A549 (cell line): ENCODE measurements at regions of chr17 and their contacts with region 1.

Region 1: GRCh38 chr17:79839363-79840268 is at the start of gene CBX4:
- DNase-seq: peak; percentile 87 to 97
- ATAC-seq: peak; percentile 61 to 73
- H3K4me3 ChIP-seq: peak within 1 kb of the TSS; percentile 82
- H3K27ac ChIP-seq: peak within 1 kb of the TSS; percentile 95 to 98
- H3K4me1 ChIP-seq: peaks cover 52% of the 10 kb centered on the region
- CTCF ChIP-seq: peak; percentile 99
- EP300 ChIP-seq: peak in 1 of 2 experiments; percentile 55; a peak in 1 of 5 replicates
- POLR2A ChIP-seq: peak; percentile 77
- RAD21 ChIP-seq: peak; percentile 55 to 90
- polyA plus RNA-seq, gene CBX4: 21.9 and 34.1 TPM in 2 replicates

Region 2: DNA sequence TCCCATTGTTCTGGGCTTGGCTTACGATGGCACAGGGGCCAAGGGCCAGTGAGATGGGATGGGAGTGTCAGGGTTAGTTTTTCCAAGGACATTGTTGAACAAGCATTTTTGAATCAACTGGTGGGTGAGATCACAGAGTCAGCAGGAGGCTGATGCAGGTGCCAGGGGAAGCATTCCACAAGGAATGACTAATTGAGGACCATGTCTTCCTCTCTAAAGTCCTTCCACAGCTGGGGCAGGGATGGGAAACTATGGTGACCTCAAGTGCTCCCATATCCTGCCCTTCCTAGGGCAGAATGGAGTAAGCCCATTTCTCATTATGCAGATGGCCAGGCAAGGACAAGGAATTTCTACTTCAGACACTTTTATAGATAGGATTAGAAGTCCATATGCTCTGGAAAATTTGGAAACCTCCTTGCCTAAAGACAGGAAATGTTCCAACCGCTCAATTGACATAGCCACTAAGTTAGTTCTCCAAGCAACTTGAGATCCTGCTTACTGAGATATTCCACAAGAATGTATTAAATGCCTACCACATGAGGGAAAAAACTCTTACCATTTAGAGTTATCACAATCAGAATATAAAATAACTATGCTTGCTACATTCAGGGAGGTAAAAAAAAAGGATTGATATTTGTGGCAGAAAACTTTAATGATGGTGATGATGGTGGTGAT is 786.2 kb before region 1 on chr17:
- CTCF ChIA-PET with region 1: no interaction called
- POLR2A ChIA-PET with region 1: no interaction called
- DNase-seq: no peak
- ATAC-seq: no peak
- H3K4me3 ChIP-seq: no peak overlapping the region
- H3K27ac ChIP-seq: no peak overlapping the region
- H3K4me1 ChIP-seq: no peaks in the 10 kb centered on the region
- CTCF ChIP-seq: no peak
- EP300 ChIP-seq: no peak
- POLR2A ChIP-seq: no peak
- RAD21 ChIP-seq: no peak

Region 3: DNA sequence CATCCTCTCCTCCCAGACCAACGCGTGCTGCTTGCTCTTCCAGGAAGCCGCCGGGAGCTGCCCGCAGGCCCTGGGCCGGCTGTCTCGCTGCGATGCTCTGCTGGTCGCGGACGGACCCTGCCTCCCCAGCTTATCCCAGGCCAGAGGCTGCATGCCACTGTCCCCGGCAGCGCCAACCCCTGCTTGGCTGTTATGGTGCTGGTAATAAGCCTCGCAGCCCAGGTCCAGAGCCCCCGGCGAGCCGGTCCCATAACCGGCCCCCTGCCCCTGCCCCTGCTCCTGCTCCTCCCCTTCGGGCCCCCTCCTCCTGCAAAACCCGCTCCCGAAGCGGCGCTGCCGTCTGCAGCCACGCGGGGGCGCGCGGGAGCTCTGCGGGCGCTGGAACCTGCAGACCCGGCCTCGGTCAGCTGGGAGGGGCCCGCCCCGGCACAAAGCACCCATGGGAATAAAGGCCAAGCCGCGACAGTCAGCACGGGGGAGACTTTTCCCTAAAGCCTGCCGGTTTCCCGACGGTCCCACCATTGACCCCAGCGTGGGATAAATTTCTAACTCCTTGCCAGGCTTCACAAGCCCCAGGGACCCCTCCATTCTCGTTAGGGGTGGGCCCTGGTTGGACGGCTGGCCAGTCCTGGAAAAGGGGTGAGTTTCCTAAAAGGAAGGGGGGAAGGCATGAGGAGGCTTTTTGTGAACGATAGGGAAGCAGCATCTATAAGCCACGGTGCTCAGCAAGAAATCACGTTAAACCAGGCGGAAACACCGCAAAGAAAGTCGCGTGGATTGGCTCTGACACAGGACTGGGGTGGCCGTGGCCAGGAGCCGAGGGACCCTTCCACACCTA is 97.6 kb before region 1 on chr17:
- CTCF ChIA-PET with region 1: interaction called, 28 read pairs
- POLR2A ChIA-PET with region 1: interaction called, 6 read pairs
- DNase-seq: peak; percentile 69 to 93
- ATAC-seq: peak; percentile 68 to 85
- H3K4me3 ChIP-seq: peak overlapping the region; percentile 36; the same call in 2 of the 3 replicates
- H3K27ac ChIP-seq: peak overlapping the region; percentile 51 to 74; a peak in 5 of 6 replicates
- H3K4me1 ChIP-seq: peaks cover 18% of the 10 kb centered on the region; the same call in 2 of the 3 replicates
- CTCF ChIP-seq: peak; percentile 97
- EP300 ChIP-seq: no peak
- POLR2A ChIP-seq: no peak
- RAD21 ChIP-seq: peak; percentile 72 to 85

Region 4: DNA sequence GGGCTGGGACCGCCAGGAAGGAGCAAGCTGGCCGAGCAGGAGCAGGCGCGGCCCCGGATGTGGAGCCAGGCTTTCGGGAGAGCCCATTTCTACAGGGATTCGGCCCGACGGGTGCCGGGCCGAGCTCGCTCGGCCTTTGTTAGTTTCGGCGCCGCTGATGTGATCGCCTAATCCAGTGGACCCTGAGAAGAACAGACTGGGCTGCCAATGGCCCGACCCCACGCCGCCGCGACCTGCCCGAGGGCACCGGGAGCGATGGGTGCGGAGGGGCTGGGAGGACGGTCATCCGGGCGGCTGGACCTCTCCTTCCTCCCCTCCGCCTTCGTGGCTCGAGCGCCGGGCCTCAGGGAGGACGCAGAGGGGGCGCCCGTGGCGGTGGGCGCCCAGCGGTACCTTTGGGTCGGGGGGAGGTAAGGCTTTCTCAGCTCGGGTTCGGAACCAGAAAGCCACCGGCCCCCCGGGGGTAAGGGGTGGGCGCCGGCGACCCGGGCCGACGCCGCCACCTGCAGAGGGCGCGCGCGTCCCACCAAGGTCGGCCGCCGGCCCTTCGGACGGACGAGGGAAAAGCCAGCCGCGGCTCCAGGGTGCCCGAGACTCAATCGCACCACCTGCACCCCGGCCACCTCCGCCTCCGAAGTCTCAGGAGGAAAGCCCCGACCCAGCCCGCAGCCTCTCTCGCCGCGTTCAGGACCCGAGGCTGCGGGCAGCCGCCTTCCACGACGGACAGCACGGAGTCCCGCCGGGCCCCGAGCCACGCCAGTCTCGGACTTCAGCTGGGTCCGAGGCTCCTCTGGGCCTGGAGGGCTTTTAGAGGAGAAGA is 49.9 kb before region 1 on chr17:
- CTCF ChIA-PET with region 1: interaction called, 1,281 read pairs
- POLR2A ChIA-PET with region 1: interaction called, 19 read pairs
- DNase-seq: peak; percentile 58 to 95
- ATAC-seq: peak; percentile 19 to 65; a peak in 3 of 6 replicates
- H3K4me3 ChIP-seq: no peak overlapping the region
- H3K27ac ChIP-seq: peak overlapping the region; percentile 63 to 73; a peak in 5 of 6 replicates
- H3K4me1 ChIP-seq: peaks cover 22% of the 10 kb centered on the region
- CTCF ChIP-seq: peak; percentile 98
- EP300 ChIP-seq: no peak
- POLR2A ChIP-seq: no peak
- RAD21 ChIP-seq: peak; percentile 85 to 96

Region 5: GRCh38 chr17:79818026-79818758 is 21.4 kb before region 1 on chr17:
- CTCF ChIA-PET with region 1: interaction called, 1,281 read pairs
- POLR2A ChIA-PET with region 1: interaction called, 84 read pairs
- DNase-seq: no peak
- ATAC-seq: no peak
- H3K4me3 ChIP-seq: no peak overlapping the region
- H3K27ac ChIP-seq: no peak overlapping the region
- H3K4me1 ChIP-seq: peaks cover 6% of the 10 kb centered on the region
- CTCF ChIP-seq: no peak
- EP300 ChIP-seq: no peak
- POLR2A ChIP-seq: no peak
- RAD21 ChIP-seq: no peak

Region 6: GRCh38 chr17:79892459-79892858 is 52.8 kb after region 1 on chr17:
- CTCF ChIA-PET with region 1: interaction called, 11 read pairs
- POLR2A ChIA-PET with region 1: no interaction called
- DNase-seq: no peak
- ATAC-seq: no peak; a peak in 3 of 6 replicates
- H3K4me3 ChIP-seq: no peak overlapping the region
- H3K27ac ChIP-seq: no peak overlapping the region
- H3K4me1 ChIP-seq: no peaks in the 10 kb centered on the region
- CTCF ChIP-seq: no peak
- EP300 ChIP-seq: no peak
- POLR2A ChIP-seq: no peak
- RAD21 ChIP-seq: no peak

Region 7: DNA sequence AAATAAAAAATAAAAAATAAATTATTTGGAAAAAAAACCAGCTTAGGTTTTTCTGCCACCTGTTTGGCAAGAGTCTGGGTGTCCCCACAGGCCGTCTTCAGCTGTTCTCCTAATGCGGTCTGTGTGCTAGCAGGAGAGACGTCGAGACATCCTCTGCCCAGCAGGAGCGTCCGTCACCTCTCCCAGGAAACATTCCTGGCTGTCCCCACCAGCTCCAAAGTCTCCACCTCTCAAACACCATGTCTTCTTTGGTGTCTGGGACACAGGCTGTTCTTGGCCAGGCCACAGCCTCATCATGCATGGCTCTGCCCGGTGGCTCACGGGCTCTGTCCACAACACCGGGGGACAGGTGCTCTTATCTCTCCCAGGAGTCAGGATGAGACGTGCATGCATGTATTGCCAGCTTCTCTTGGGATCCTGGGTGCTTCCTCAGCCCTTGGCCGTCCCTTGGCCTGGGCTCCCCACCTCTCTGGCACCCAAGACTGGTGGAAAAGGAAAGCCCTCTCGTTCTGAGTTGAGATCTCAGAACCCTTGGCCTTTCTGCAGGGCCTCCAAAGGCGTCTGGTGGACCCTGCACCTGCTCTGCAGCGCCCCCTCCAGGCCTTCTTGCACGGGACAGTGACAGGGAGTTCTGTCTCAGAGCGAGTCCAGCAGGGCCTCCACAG is 84.5 kb after region 1 on chr17:
- CTCF ChIA-PET with region 1: interaction called, 27 read pairs
- POLR2A ChIA-PET with region 1: interaction called, 15 read pairs
- DNase-seq: peak in 1 of 2 experiments; percentile 77
- ATAC-seq: peak; percentile 38 to 83; a peak in 4 of 6 replicates
- H3K4me3 ChIP-seq: no peak overlapping the region
- H3K27ac ChIP-seq: peak overlapping the region; percentile 25 to 77; a peak in 5 of 6 replicates
- H3K4me1 ChIP-seq: peaks cover 28% of the 10 kb centered on the region
- CTCF ChIP-seq: peak; percentile 46; the same call in 2 of the 3 replicates
- EP300 ChIP-seq: no peak
- POLR2A ChIP-seq: no peak
- RAD21 ChIP-seq: peak; percentile 30 to 53; a peak in 2 of 5 replicates

Region 8: DNA sequence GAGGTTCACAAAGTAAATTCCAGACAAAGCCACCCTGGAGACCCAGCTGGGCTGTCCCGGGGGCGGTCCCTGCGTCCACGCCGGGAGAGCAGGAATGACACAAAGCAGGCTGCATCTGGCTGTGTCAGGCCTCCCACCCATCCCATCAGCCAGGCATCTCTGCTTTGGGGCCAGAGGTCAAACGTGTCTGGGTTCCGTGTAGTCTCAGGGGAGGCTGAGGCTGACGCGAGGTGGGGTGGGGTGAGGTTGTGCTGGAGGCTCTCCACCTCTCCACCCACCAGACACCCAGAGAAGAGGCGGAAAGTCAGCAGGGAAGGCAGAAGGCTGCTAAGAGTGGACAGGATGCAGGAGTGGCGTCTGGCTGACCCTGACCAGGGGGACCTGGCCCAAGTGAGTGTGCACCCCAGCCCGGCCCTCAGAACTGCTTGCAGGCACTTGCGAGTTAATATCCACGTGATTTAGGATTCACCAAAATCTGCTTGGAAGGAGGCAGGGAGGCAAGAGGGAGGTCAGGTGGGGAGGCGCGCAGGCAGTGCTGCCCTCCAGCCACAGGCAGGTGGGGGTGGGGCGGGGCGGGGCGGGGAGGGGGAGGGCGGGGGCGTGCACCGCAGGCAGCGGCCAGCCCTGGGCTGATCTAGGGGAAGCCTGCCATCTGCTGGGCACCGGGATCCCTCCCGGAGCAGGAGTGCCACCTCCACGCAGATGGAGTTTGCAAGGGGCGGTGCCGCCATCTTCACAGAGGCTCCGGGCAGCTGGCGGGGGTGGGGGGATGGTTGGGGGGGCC is 151.7 kb after region 1 on chr17:
- CTCF ChIA-PET with region 1: interaction called, 47 read pairs
- POLR2A ChIA-PET with region 1: interaction called, 38 read pairs
- DNase-seq: peak; percentile 88 to 97
- ATAC-seq: peak; percentile 69 to 90
- H3K4me3 ChIP-seq: peak overlapping the region; percentile 51
- H3K27ac ChIP-seq: peak overlapping the region; percentile 89 to 95
- H3K4me1 ChIP-seq: peaks cover 83% of the 10 kb centered on the region
- CTCF ChIP-seq: peak; percentile 88
- EP300 ChIP-seq: no peak; a peak in 1 of 5 replicates
- POLR2A ChIP-seq: no peak
- RAD21 ChIP-seq: peak; percentile 86 to 99